ENCODE measurements at regions of chr14 and their contacts with region 1.

Region 1: GRCh38 chr14:63770187-63770807 is 42.4 kb upstream of the SGPP1 start:
- DNase-seq: peak in 1 of 4 experiments; percentile 40
- ATAC-seq: peak; percentile 87
- H3K4me3 ChIP-seq: no peak overlapping the region
- H3K27ac ChIP-seq: no peak overlapping the region
- H3K4me1 ChIP-seq: no peaks in the 10 kb centered on the region; a peak in 1 of 5 replicates
- H3K27me3 ChIP-seq: no peaks in the 10 kb centered on the region; a peak in 1 of 5 replicates
- CTCF ChIP-seq: peak; percentile 42 to 64 (median 44); a peak in 5 of 6 replicates
- EP300 ChIP-seq: no peak
- POLR2A ChIP-seq: no peak
- RAD21 ChIP-seq: peak; percentile 42 to 68; a peak in 3 of 4 replicates

Region 2: DNA sequence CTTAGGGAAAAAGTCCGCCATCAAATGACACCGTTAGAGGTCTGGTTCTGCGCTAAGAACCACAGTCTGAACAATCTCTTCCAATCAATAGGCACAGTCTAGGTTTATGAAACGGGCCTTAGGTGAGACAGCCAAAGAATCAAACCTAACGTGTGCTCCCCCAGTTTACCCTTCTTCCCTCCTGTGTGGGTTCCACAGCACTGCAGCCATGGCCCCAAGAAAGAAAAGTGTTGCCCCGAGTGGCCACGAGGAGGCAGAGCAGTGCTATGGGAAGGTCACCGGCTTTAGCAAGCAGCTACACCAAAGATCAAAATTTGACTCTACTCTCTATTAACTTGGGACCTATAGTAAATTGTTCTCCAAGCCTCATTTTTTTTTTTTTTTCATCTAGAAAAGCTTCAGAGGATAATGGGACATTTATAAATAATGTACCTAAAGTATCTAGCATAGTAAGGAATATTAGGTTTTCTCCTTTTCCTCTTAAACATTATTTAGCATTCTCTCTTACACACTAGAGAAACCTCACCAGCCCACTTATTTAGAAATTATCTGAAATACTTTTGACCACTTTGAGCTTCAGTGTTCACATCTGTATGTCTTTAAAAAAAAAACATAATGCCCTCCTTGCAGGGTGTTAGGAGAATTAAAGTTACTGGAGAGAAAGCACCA is 381.4 kb before region 1 on chr14:
- CTCF ChIA-PET with region 1: no interaction called
- POLR2A ChIA-PET with region 1: no interaction called
- in situ Hi-C with region 1: no loop called
- intact Hi-C with region 1: loop called (anchors 1 kb)
- DNase-seq: peak; percentile 23 to 55 (median 36)
- ATAC-seq: peak; percentile 94
- H3K4me3 ChIP-seq: no peak overlapping the region
- H3K27ac ChIP-seq: no peak overlapping the region
- H3K4me1 ChIP-seq: no peaks in the 10 kb centered on the region
- H3K27me3 ChIP-seq: no peaks in the 10 kb centered on the region
- CTCF ChIP-seq: peak; percentile 63 to 79 (median 74)
- EP300 ChIP-seq: no peak
- POLR2A ChIP-seq: no peak
- RAD21 ChIP-seq: peak; percentile 57 to 77

Region 3: GRCh38 chr14:63632932-63633514 is 137.3 kb before region 1 on chr14:
- CTCF ChIA-PET with region 1: no interaction called
- POLR2A ChIA-PET with region 1: no interaction called
- in situ Hi-C with region 1: no loop called
- intact Hi-C with region 1: loop called (anchors 10 kb)
- DNase-seq: peak in 2 of 4 experiments; percentile 4 to 7
- ATAC-seq: 0 out of 3 replicates have a peak, but pooled peaks have one; percentile 42
- H3K4me3 ChIP-seq: no peak overlapping the region
- H3K27ac ChIP-seq: no peak overlapping the region
- H3K4me1 ChIP-seq: no peaks in the 10 kb centered on the region; a peak in 1 of 5 replicates
- H3K27me3 ChIP-seq: no peaks in the 10 kb centered on the region
- CTCF ChIP-seq: peak in 2 of 3 experiments; percentile 25 to 45; a peak in 3 of 6 replicates
- EP300 ChIP-seq: no peak
- POLR2A ChIP-seq: no peak
- RAD21 ChIP-seq: no peak